ENCODE measurements at regions of chr14 and their contacts with region 1.

Region 1: GRCh38 chr14:100187247-100187833 is 27.9 kb upstream of the DEGS2 start:
- DNase-seq: no peak
- ATAC-seq: peak in 1 of 4 donors; percentile 21
- H3K4me3 ChIP-seq: no peak overlapping the region
- H3K27ac ChIP-seq: no peak overlapping the region
- H3K4me1 ChIP-seq: peaks cover 0 to 10% (median 7%) of the 10 kb centered on the region in 12 donors
- H3K27me3 ChIP-seq: no peaks in the 10 kb centered on the region
- CTCF ChIP-seq: no peak
- POLR2A ChIP-seq: no peak

Region 2: GRCh38 chr14:100114109-100114765 is 73.1 kb before region 1 on chr14:
- intact Hi-C with region 1: loop called in 7 of 10 experiments (anchors 2 to 10 kb)
- DNase-seq: no peak
- ATAC-seq: no peak
- H3K4me3 ChIP-seq: no peak overlapping the region
- H3K27ac ChIP-seq: no peak overlapping the region
- H3K4me1 ChIP-seq: peaks cover 0 to 7% (median 0%) of the 10 kb centered on the region in 12 donors
- H3K27me3 ChIP-seq: no peaks in the 10 kb centered on the region
- CTCF ChIP-seq: no peak
- POLR2A ChIP-seq: no peak

Measured in heart left ventricle (tissue), 16 donors.